ENCODE measurements at regions of chr12 and their contacts with region 1.

Region 1: GRCh38 chr12:95396849-95397468 is 77.0 kb upstream of the METAP2 start:
- DNase-seq: no peak
- H3K4me3 ChIP-seq: no peak overlapping the region
- H3K27ac ChIP-seq: peak overlapping the region; percentile 15 to 54 (median 32)
- H3K4me1 ChIP-seq: peaks cover 0 to 26% (median 21%) of the 10 kb centered on the region in 4 donors
- H3K27me3 ChIP-seq: peaks cover 0 to 3% (median 0%) of the 10 kb centered on the region in 3 donors
- CTCF ChIP-seq: no peak
- EP300 ChIP-seq: no peak
- POLR2A ChIP-seq: no peak

Region 2: DNA sequence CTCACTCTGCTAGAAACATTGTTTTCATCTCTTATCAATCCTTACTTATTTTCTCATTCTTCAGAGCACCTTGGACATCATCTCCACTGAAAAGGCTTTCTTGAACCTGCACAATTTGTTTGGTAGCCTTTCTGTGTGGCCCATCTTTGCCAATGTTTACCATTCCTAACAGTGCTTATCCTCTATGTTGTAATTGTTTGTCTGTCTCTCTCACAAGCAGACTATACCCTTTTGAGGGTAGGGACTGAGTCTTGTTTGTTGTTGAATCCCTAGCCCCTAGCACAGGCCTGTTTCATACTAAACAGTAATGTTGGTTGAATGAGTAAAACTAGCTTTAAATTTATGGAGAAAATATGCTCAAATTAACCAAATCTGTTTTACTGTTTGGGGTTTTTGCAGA is 1920.4 kb before region 1 on chr12:
- intact Hi-C with region 1: loop called (anchors 10 kb)
- DNase-seq: no peak
- H3K4me3 ChIP-seq: no peak overlapping the region
- H3K27ac ChIP-seq: no peak overlapping the region
- H3K4me1 ChIP-seq: no peaks in the 10 kb centered on the region
- H3K27me3 ChIP-seq: no peaks in the 10 kb centered on the region
- CTCF ChIP-seq: no peak
- EP300 ChIP-seq: no peak
- POLR2A ChIP-seq: no peak

Region 3: DNA sequence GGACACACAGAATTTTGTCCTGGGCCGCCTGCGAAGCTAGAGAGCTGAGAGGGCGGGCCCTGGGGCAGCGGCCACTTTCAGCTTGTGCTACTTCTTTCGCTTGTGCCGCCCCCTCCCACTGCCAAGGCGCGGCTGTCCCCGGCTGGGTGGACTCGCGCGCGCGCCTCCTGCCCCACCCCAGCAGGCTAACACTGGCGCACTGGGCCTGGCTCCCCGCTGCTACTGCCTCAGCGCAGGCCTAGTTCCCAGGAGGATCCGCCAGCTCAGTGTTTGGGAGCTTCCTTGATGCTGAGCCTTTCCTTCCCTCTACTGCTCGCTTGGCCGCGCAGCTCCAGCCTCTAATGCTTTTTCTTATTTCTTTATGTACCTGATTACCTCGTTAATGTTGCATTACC is 49.5 kb after region 1 on chr12:
- intact Hi-C with region 1: no loop called
- DNase-seq: no peak
- H3K4me3 ChIP-seq: no peak overlapping the region
- H3K27ac ChIP-seq: no peak overlapping the region
- H3K4me1 ChIP-seq: no peaks in the 10 kb centered on the region
- H3K27me3 ChIP-seq: no peaks in the 10 kb centered on the region
- CTCF ChIP-seq: no peak
- EP300 ChIP-seq: no peak
- POLR2A ChIP-seq: no peak

Region 4: GRCh38 chr12:95574799-95575452 is 178.0 kb after region 1 on chr12:
- intact Hi-C with region 1: no loop called
- DNase-seq: no peak
- H3K4me3 ChIP-seq: no peak overlapping the region
- H3K27ac ChIP-seq: no peak overlapping the region
- H3K4me1 ChIP-seq: peaks cover 0 to 5% (median 2%) of the 10 kb centered on the region in 4 donors
- H3K27me3 ChIP-seq: peaks cover 0 to 3% (median 0%) of the 10 kb centered on the region in 3 donors
- CTCF ChIP-seq: peak in 3 of 4 experiments; percentile 43 to 70 (median 44)
- EP300 ChIP-seq: no peak
- POLR2A ChIP-seq: no peak